Activated CD4-positive, alpha-beta memory T cell treated with anti-CD3 and anti-CD28 coated beads for 36 hours (primary cell): ENCODE measurements at regions of chr5 and their contacts with region 1.

Region 1: GRCh38 chr5:151115274-151115905 is 34.6 kb upstream of the TNIP1 start:
- DNase-seq: peak; percentile 80
- H3K4me3 Mint-ChIP-seq: no peak overlapping the region
- H3K27ac Mint-ChIP-seq: no peak overlapping the region
- H3K4me1 Mint-ChIP-seq: no peaks in the 10 kb centered on the region
- H3K27me3 Mint-ChIP-seq: no peaks in the 10 kb centered on the region

Region 2: DNA sequence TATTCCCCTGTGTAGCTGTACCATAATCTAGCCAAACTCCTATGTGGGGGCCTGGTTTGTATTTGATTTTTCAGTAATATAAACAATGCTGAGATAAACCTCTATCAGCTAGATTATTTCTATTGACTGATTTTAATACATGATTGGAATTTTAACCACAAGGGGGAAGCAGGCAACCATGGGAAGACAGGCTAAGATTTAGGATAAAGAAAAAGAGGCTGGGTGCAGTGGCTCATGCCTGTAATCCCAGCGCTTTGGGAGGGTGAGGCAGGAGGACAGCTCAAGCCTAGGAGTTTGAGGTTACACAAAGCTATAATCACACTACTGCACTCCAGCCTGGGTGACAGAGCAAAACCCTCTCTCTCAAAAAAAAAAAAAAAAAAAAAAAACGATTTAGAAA is 113.1 kb before region 1 on chr5:
- CTCF ChIA-PET with region 1: interaction called, 20 read pairs
- POLR2A ChIA-PET with region 1: no interaction called
- intact Hi-C with region 1: loop called (anchors 1 kb)
- DNase-seq: no peak
- H3K4me3 Mint-ChIP-seq: no peak overlapping the region
- H3K27ac Mint-ChIP-seq: no peak overlapping the region
- H3K4me1 Mint-ChIP-seq: no peaks in the 10 kb centered on the region
- H3K27me3 Mint-ChIP-seq: no peaks in the 10 kb centered on the region

Region 3: GRCh38 chr5:151063142-151063949 is 52.0 kb before region 1 on chr5:
- CTCF ChIA-PET with region 1: interaction called, 382 read pairs
- POLR2A ChIA-PET with region 1: no interaction called
- intact Hi-C with region 1: no loop called
- DNase-seq: no peak
- H3K4me3 Mint-ChIP-seq: no peak overlapping the region
- H3K27ac Mint-ChIP-seq: peak overlapping the region; percentile 94
- H3K4me1 Mint-ChIP-seq: peaks cover 97% of the 10 kb centered on the region
- H3K27me3 Mint-ChIP-seq: no peaks in the 10 kb centered on the region

Region 4: GRCh38 chr5:151080623-151081430 is 34.6 kb before region 1 on chr5 and contains the start of gene TNIP1:
- CTCF ChIA-PET with region 1: interaction called, 60 read pairs
- POLR2A ChIA-PET with region 1: interaction called, 4 read pairs
- intact Hi-C with region 1: no loop called
- DNase-seq: peak; percentile 96
- H3K4me3 Mint-ChIP-seq: peak within 1 kb of the TSS; percentile 89
- H3K27ac Mint-ChIP-seq: peak within 1 kb of the TSS; percentile 94
- H3K4me1 Mint-ChIP-seq: peaks cover 69% of the 10 kb centered on the region
- H3K27me3 Mint-ChIP-seq: no peaks in the 10 kb centered on the region
- total RNA-seq, gene TNIP1: 388 to 401 TPM

Region 5: GRCh38 chr5:151101697-151102096 is 13.7 kb before region 1 on chr5:
- CTCF ChIA-PET with region 1: interaction called, 53 read pairs
- POLR2A ChIA-PET with region 1: no interaction called
- intact Hi-C with region 1: no loop called
- DNase-seq: no peak
- H3K4me3 Mint-ChIP-seq: no peak overlapping the region
- H3K27ac Mint-ChIP-seq: peak overlapping the region; percentile 25
- H3K4me1 Mint-ChIP-seq: peaks cover 36% of the 10 kb centered on the region
- H3K27me3 Mint-ChIP-seq: no peaks in the 10 kb centered on the region

Region 6: DNA sequence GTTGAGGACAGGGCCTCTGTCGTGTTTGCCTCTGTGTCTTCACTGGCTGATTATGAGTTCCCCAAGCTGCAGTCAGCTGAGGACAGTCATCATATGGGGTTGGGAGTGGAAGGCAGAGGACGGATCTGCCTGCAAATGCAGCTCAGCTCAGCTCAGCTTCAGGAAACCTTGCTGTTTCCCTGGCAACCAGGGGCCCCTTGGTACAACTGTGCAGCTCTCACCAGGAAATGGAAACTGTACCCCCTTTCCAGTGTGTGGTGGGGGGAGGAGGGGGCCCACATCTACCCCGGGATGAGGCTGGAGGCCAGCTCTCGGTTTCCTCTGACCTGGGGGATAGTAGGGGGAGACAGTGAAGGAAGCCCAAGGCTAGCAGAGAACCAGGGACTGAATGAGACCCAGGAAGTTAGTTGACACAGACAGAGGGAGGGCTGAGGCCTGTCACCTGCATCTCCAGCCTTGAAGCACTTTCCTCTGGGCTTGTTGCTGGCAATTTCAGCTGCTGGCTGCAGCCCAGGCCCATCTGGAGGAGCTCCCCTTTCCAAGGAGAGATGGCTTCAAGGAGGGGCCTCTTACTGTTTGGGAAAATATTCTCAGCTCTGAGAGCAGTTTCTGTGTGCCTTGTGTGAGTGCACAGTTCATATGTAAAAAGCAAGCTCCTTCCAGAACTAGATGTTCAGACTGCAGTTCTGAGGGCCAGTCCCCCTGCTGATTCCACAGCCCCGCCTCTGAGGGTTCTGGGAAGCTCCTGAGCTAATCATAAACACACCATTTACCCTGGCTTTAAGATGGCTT is 35.3 kb after region 1 on chr5:
- CTCF ChIA-PET with region 1: interaction called, 11 read pairs
- POLR2A ChIA-PET with region 1: no interaction called
- intact Hi-C with region 1: no loop called
- DNase-seq: peak; percentile 87
- H3K4me3 Mint-ChIP-seq: peak overlapping the region; percentile 36
- H3K27ac Mint-ChIP-seq: peak overlapping the region; percentile 90
- H3K4me1 Mint-ChIP-seq: peaks cover 94% of the 10 kb centered on the region
- H3K27me3 Mint-ChIP-seq: no peaks in the 10 kb centered on the region

Region 7: DNA sequence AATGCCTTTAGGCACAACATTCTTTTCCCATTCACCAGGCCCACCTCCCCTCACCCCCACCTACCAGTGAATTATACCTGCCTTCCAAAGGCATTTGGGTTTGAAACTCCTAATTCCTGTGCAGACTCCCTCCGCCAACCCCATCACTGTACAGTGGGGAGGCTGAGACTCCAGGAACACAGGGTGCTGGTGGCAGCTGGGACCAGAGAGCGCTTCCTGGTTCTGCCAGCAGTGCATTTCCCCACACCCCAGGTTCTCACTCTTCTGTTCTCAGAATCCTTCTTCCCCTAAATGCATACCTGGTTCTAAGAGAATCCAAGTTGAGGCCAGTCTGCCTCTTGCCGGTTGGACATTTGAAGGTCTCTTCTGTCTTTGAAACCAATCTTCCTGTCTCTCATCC is 210.9 kb after region 1 on chr5:
- CTCF ChIA-PET with region 1: no interaction called
- POLR2A ChIA-PET with region 1: no interaction called
- intact Hi-C with region 1: no loop called
- DNase-seq: no peak
- H3K4me3 Mint-ChIP-seq: no peak overlapping the region
- H3K27ac Mint-ChIP-seq: no peak overlapping the region
- H3K4me1 Mint-ChIP-seq: no peaks in the 10 kb centered on the region
- H3K27me3 Mint-ChIP-seq: peaks cover 5% of the 10 kb centered on the region

Region 8: DNA sequence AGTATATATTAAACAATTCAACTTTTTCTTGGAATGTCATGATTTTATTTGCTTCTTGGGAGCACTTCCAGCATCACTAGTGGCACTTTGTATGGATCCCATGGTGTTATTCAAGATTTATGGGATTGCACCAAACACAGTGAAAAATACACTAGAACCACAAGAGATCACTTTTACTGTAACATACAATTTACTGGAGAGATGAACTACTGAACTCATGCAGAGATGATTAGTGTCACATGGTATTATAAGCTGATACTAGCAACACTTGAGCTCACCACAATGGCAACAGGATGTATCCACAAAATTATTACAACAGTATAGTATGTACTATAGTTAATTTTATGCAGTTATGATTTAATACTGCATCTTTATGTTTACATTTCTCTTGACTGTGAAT is 248.3 kb after region 1 on chr5:
- CTCF ChIA-PET with region 1: no interaction called
- POLR2A ChIA-PET with region 1: no interaction called
- intact Hi-C with region 1: no loop called
- DNase-seq: no peak
- H3K4me3 Mint-ChIP-seq: no peak overlapping the region
- H3K27ac Mint-ChIP-seq: no peak overlapping the region
- H3K4me1 Mint-ChIP-seq: no peaks in the 10 kb centered on the region
- H3K27me3 Mint-ChIP-seq: peaks cover 6% of the 10 kb centered on the region